Left cardiac atrium (tissue), 4 donors: ENCODE measurements at regions of chr5 and their contacts with region 1.

Region 1: GRCh38 chr5:115838885-115839518 is 2.4 kb downstream of the ATG12 start:
- DNase-seq: no peak
- ATAC-seq: no peak

Region 2: DNA sequence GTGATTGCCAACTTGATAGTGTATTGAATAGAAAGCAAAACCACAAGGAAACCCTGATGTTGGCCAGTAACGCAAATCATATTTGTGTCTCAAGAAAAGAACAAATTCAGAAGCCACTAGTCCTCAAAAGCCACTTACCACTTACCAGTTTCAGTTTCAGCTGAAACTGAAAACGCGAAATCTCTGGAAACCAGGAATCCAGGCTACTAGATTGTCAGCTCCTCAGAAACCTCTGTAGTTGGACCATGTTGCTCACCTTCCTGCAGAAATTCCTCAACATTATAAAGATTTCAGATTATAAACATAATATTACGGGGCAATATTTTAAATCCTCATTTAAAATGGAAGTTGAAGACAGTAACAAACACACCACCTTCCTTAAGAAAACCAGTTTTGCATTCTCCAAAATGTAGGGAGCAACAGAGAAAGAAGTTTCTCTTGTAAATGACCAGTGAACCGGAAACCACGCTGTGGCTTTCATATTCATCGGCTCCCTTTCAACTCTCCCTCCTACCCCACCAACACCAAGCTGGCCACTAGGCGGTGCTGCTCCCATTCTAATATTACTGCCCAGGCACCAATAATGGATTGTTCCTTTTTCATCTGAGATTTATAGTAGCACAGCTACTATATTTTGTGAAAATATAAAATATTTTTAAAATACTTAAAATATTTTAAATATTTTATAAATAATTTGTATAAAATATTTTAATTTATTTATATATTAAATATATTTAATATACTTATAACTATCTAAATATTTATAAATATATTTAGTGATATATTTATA is 204.5 kb before region 1 on chr5:
- intact Hi-C with region 1: loop called in 1 of 2 experiments (anchors 5 kb)
- DNase-seq: peak; percentile 91
- ATAC-seq: peak; percentile 96 to 98

Region 3: GRCh38 chr5:115758356-115758755 is 80.6 kb before region 1 on chr5:
- intact Hi-C with region 1: no loop called
- DNase-seq: no peak
- ATAC-seq: no peak